MCF 10A (cell line): ENCODE measurements at regions of chr22 and their contacts with region 1.

Region 1: GRCh38 chr22:27420817-27421361 is 380.7 kb downstream of the MN1 start:
- DNase-seq: peak; percentile 96
- H3K4me3 Mint-ChIP-seq: peak overlapping the region; percentile 65
- H3K27ac Mint-ChIP-seq: peak overlapping the region; percentile 90
- H3K4me1 Mint-ChIP-seq: peaks cover 46% of the 10 kb centered on the region
- H3K27me3 Mint-ChIP-seq: no peaks in the 10 kb centered on the region
- CTCF ChIP-seq: no peak

Region 2: GRCh38 chr22:27461470-27461869 is 40.6 kb after region 1 on chr22:
- CTCF ChIA-PET with region 1: interaction called, 3 read pairs
- POLR2A ChIA-PET with region 1: interaction called, 8 read pairs
- intact Hi-C with region 1: loop called (anchors 2 kb)
- DNase-seq: peak; percentile 54
- H3K4me3 Mint-ChIP-seq: no peak overlapping the region
- H3K27ac Mint-ChIP-seq: peak overlapping the region; percentile 68
- H3K4me1 Mint-ChIP-seq: peaks cover 36% of the 10 kb centered on the region
- H3K27me3 Mint-ChIP-seq: no peaks in the 10 kb centered on the region
- CTCF ChIP-seq: no peak